GM12878 (cell line): ENCODE measurements at regions of chr7 and their contacts with region 1.

Region 1: GRCh38 chr7:94395141-94396036 is 694 bp downstream of the COL1A2 start:
- DNase-seq: peak; percentile 12
- ATAC-seq: peak; percentile 93
- H3K4me3 ChIP-seq: no peak overlapping the region
- H3K27ac ChIP-seq: no peak overlapping the region
- H3K4me1 ChIP-seq: no peaks in the 10 kb centered on the region
- H3K27me3 ChIP-seq: peaks cover 2 to 3% of the 10 kb centered on the region in 2 experiments; a peak in 2 of 4 replicates
- CTCF ChIP-seq: peak; percentile 63 to 79 (median 76)
- EP300 ChIP-seq: no peak
- POLR2A ChIP-seq: no peak
- RAD21 ChIP-seq: peak; percentile 90

Region 2: GRCh38 chr7:93442478-93443224 is 952.7 kb before region 1 on chr7:
- CTCF ChIA-PET with region 1: interaction called, 6 read pairs
- POLR2A ChIA-PET with region 1: no interaction called
- RAD21 ChIA-PET with region 1: interaction called, 6 read pairs
- SMC1A ChIA-PET with region 1: no interaction called
- in situ Hi-C with region 1: no loop called
- intact Hi-C with region 1: loop called (anchors 2 kb)
- DNase-seq: no peak
- ATAC-seq: peak; percentile 86
- H3K4me3 ChIP-seq: no peak overlapping the region
- H3K27ac ChIP-seq: no peak overlapping the region
- H3K4me1 ChIP-seq: no peaks in the 10 kb centered on the region
- H3K27me3 ChIP-seq: no peaks in the 10 kb centered on the region; a peak in 2 of 4 replicates
- CTCF ChIP-seq: peak; percentile 57 to 79 (median 75)
- EP300 ChIP-seq: no peak
- POLR2A ChIP-seq: no peak
- RAD21 ChIP-seq: peak; percentile 56

Region 3: DNA sequence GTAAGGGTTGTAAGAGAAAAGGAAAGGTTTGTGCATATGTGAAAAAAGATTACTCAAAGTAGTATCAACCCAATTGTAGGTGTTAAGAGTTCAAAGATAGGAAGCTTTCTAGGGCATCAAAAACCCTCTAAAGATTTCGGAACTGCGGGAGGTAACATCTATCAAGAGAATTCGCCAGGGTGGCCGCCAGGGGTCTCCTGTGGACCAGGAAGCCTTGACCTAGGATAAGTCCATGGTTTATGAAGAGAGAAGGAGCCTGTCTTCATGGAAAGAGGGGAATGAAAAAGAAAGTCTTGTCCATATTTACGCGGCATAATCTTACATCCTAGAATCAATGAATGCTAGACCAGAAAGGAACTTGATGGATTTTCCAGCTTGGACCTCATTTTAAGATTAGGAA is 680.2 kb before region 1 on chr7:
- CTCF ChIA-PET with region 1: interaction called, 6 read pairs
- POLR2A ChIA-PET with region 1: no interaction called
- RAD21 ChIA-PET with region 1: no interaction called
- SMC1A ChIA-PET with region 1: interaction called, 4 read pairs
- in situ Hi-C with region 1: no loop called
- intact Hi-C with region 1: loop called (anchors 1 kb)
- DNase-seq: no peak
- ATAC-seq: peak; percentile 56; the same call in 2 of the 3 replicates
- H3K4me3 ChIP-seq: no peak overlapping the region
- H3K27ac ChIP-seq: no peak overlapping the region
- H3K4me1 ChIP-seq: no peaks in the 10 kb centered on the region
- H3K27me3 ChIP-seq: no peaks in the 10 kb centered on the region; a peak in 1 of 4 replicates
- CTCF ChIP-seq: peak; percentile 38 to 48 (median 47)
- EP300 ChIP-seq: no peak
- POLR2A ChIP-seq: no peak
- RAD21 ChIP-seq: peak; percentile 76

Region 4: DNA sequence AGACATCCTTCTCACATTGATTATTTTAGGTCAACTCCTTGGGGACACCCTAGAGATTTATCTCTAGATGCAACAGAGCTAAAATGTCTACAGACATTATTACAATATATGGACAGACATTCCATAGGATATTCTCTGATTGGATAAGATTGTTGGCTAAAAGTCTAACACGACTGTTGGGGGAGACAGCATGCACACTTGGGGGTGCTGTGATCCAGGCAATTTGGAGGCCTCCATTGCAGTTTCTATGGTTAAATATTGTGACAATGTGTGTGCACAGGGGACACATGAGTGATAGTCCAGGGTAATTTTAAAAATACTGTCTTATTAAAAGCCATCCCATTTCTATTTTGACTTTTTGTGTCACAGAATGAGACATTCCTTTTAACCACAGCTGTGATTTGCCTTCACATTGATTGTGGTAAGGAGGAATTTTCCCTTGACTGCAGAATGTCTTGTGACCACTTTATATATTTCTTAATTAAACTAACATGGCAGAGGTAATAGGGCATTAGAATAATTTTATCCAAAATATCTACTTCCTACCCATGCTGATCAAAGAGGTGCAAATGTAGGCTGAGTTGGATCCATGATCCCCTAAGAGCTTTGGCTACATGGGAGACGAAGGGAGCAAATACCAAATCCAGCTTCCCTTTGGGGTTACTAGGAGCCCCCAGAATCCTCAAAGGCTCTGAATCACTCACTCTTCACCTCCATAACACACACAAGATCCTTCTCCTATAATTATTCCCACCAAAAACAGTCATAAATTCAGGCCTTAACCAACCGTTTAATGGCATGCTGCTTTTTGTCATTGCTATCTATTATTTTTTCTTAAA is 512.1 kb before region 1 on chr7:
- CTCF ChIA-PET with region 1: interaction called, 4 read pairs
- POLR2A ChIA-PET with region 1: no interaction called
- RAD21 ChIA-PET with region 1: interaction called, 4 read pairs
- SMC1A ChIA-PET with region 1: no interaction called
- in situ Hi-C with region 1: no loop called
- intact Hi-C with region 1: loop called (anchors 5 kb)
- DNase-seq: no peak
- ATAC-seq: peak; percentile 48; the same call in 2 of the 3 replicates
- H3K4me3 ChIP-seq: no peak overlapping the region
- H3K27ac ChIP-seq: no peak overlapping the region
- H3K4me1 ChIP-seq: no peaks in the 10 kb centered on the region
- H3K27me3 ChIP-seq: no peaks in the 10 kb centered on the region
- CTCF ChIP-seq: peak in 1 of 3 experiments; percentile 30; a peak in 2 of 6 replicates
- EP300 ChIP-seq: no peak
- POLR2A ChIP-seq: no peak
- RAD21 ChIP-seq: peak; percentile 24; the same call in 1 of the 2 replicates

Region 5: GRCh38 chr7:94289071-94289470 is 106.3 kb before region 1 on chr7:
- CTCF ChIA-PET with region 1: interaction called, 5 read pairs
- POLR2A ChIA-PET with region 1: no interaction called
- RAD21 ChIA-PET with region 1: interaction called, 3 read pairs
- SMC1A ChIA-PET with region 1: interaction called, 9 read pairs
- in situ Hi-C with region 1: no loop called
- intact Hi-C with region 1: loop called (anchors 5 kb)
- DNase-seq: no peak
- ATAC-seq: no peak
- H3K4me3 ChIP-seq: no peak overlapping the region
- H3K27ac ChIP-seq: no peak overlapping the region
- H3K4me1 ChIP-seq: no peaks in the 10 kb centered on the region
- H3K27me3 ChIP-seq: no peaks in the 10 kb centered on the region; a peak in 1 of 4 replicates
- CTCF ChIP-seq: peak; percentile 26 to 46 (median 30); a peak in 4 of 6 replicates
- EP300 ChIP-seq: no peak
- POLR2A ChIP-seq: no peak
- RAD21 ChIP-seq: peak; percentile 44; the same call in 1 of the 2 replicates